Activated B cell treated with CpG ODN at 0.5 μM for 24 hours (primary cell): ENCODE measurements at regions of chr15 and their contacts with region 1.

Region 1: GRCh38 chr15:68559345-68560310 is 19.2 kb upstream of the CORO2B start:
- DNase-seq: peak; percentile 78
- ATAC-seq: peak; percentile 95
- H3K4me3 Mint-ChIP-seq: peak overlapping the region; percentile 83
- H3K27ac Mint-ChIP-seq: no peak overlapping the region
- H3K4me1 Mint-ChIP-seq: peaks cover 23% of the 10 kb centered on the region
- H3K27me3 Mint-ChIP-seq: peaks cover 28% of the 10 kb centered on the region
- CTCF ChIP-seq: peak; percentile 98

Region 2: GRCh38 chr15:68407042-68407885 is 152.4 kb before region 1 on chr15:
- CTCF ChIA-PET with region 1: no interaction called
- POLR2A ChIA-PET with region 1: no interaction called
- intact Hi-C with region 1: no loop called
- DNase-seq: peak; percentile 2
- ATAC-seq: no peak
- H3K4me3 Mint-ChIP-seq: no peak overlapping the region
- H3K27ac Mint-ChIP-seq: no peak overlapping the region
- H3K4me1 Mint-ChIP-seq: no peaks in the 10 kb centered on the region
- H3K27me3 Mint-ChIP-seq: peaks cover 5% of the 10 kb centered on the region
- CTCF ChIP-seq: no peak

Region 3: GRCh38 chr15:68578174-68578979 is 18.7 kb after region 1 on chr15:
- CTCF ChIA-PET with region 1: interaction called, 9 read pairs
- POLR2A ChIA-PET with region 1: no interaction called
- intact Hi-C with region 1: loop called (anchors 1 kb)
- DNase-seq: peak; percentile 57
- ATAC-seq: peak; percentile 69
- H3K4me3 Mint-ChIP-seq: peak overlapping the region; percentile 83
- H3K27ac Mint-ChIP-seq: peak overlapping the region; percentile 71
- H3K4me1 Mint-ChIP-seq: peaks cover 38% of the 10 kb centered on the region
- H3K27me3 Mint-ChIP-seq: peaks cover 17% of the 10 kb centered on the region
- CTCF ChIP-seq: no peak

Region 4: GRCh38 chr15:68650901-68651709 is 91.5 kb after region 1 on chr15:
- CTCF ChIA-PET with region 1: interaction called, 3 read pairs
- POLR2A ChIA-PET with region 1: no interaction called
- intact Hi-C with region 1: loop called (anchors 1 kb)
- DNase-seq: peak; percentile 46
- ATAC-seq: peak; percentile 67
- H3K4me3 Mint-ChIP-seq: no peak overlapping the region
- H3K27ac Mint-ChIP-seq: no peak overlapping the region
- H3K4me1 Mint-ChIP-seq: peaks cover 2% of the 10 kb centered on the region
- H3K27me3 Mint-ChIP-seq: no peaks in the 10 kb centered on the region
- CTCF ChIP-seq: no peak

Region 5: DNA sequence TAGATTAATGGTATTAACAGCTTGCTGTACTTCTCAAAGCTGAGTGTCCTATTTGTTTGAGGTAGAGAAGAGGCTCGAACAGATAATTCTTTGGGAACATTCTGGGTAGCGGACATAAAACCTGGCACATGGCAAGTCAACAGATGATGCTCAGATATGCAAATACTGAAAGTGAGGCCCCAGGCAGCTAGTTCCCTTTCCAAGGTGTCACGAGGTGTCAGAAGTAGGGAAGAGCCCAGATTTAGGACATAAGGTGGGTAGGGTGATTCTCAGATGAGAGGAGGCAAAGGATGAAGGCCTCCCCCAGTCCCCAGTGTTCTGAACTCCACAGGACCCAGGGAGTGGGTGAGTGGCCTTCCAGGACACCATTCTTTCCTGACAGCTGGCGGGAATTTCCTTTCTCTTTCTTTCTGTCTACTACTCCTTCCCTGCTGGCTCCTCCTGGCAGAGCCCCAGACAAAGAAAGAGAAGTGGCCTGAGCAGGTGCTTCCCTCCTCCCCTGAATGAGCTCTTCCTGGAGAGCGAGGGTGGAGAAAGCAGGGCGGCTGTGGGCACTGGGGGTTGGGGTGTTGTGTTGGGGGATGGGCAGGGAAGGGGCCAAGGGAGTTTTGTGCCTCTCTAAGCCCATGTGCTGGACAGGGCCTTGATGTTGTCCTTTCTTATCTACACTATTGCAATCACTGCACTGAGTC is 106.6 kb after region 1 on chr15:
- CTCF ChIA-PET with region 1: interaction called, 11 read pairs
- POLR2A ChIA-PET with region 1: no interaction called
- intact Hi-C with region 1: no loop called
- DNase-seq: no peak
- ATAC-seq: no peak
- H3K4me3 Mint-ChIP-seq: no peak overlapping the region
- H3K27ac Mint-ChIP-seq: no peak overlapping the region
- H3K4me1 Mint-ChIP-seq: peaks cover 11% of the 10 kb centered on the region
- H3K27me3 Mint-ChIP-seq: peaks cover 7% of the 10 kb centered on the region
- CTCF ChIP-seq: no peak

Region 6: GRCh38 chr15:68829068-68829467 is 269.4 kb after region 1 on chr15:
- CTCF ChIA-PET with region 1: interaction called, 7 read pairs
- POLR2A ChIA-PET with region 1: interaction called, 7 read pairs
- intact Hi-C with region 1: loop called (anchors 1 kb)
- DNase-seq: no peak
- ATAC-seq: peak; percentile 84
- H3K4me3 Mint-ChIP-seq: no peak overlapping the region
- H3K27ac Mint-ChIP-seq: no peak overlapping the region
- H3K4me1 Mint-ChIP-seq: peaks cover 3% of the 10 kb centered on the region
- H3K27me3 Mint-ChIP-seq: peaks cover 4% of the 10 kb centered on the region
- CTCF ChIP-seq: no peak

Region 7: GRCh38 chr15:69394556-69395282 is 835.1 kb after region 1 on chr15:
- CTCF ChIA-PET with region 1: no interaction called
- POLR2A ChIA-PET with region 1: no interaction called
- intact Hi-C with region 1: loop called (anchors 10 kb)
- DNase-seq: peak; percentile 82
- ATAC-seq: peak; percentile 100
- H3K4me3 Mint-ChIP-seq: no peak overlapping the region
- H3K27ac Mint-ChIP-seq: no peak overlapping the region
- H3K4me1 Mint-ChIP-seq: peaks cover 7% of the 10 kb centered on the region
- H3K27me3 Mint-ChIP-seq: peaks cover 6% of the 10 kb centered on the region
- CTCF ChIP-seq: peak; percentile 63